ENCODE measurements at regions of chr20 and their contacts with region 1.

Region 1: DNA sequence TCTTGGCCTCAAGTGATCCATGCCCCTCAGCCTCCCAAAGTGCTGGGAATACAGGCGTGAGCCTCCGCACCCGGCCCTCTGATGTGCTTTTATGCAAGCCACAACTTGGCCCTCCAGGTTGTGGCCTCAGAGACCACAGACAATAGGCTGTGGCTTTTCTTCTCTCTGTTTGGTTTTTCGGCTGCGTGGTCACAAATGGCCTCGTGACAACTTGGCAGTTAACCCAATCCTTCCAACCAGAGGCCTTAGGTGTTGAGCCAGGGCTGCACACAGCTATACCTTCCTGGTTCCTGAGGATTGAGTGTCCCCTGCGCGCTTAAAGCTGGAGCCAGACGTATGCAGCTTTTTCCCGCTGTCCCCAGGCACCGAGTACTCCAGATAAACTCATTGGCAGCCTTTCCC is 6.3 kb upstream of the TGM3 start:
- DNase-seq: peak in 2 of 3 donors; percentile 35 to 37
- H3K4me3 ChIP-seq: peak overlapping the region in 1 of 3 experiments; percentile 1
- H3K4me3 Mint-ChIP-seq: peak overlapping the region; percentile 16 to 69
- H3K27ac ChIP-seq: peak overlapping the region; percentile 86 to 96
- H3K27ac Mint-ChIP-seq: peak overlapping the region; percentile 97 to 99 (median 99)
- H3K4me1 ChIP-seq: peaks cover 64 to 71% of the 10 kb centered on the region in 2 donors
- H3K4me1 Mint-ChIP-seq: peaks cover 60% of the 10 kb centered on the region
- H3K27me3 ChIP-seq: no peaks in the 10 kb centered on the region
- H3K27me3 Mint-ChIP-seq: peaks cover 0 to 2% (median 0%) of the 10 kb centered on the region in 3 donors
- CTCF ChIP-seq: no peak

Region 2: DNA sequence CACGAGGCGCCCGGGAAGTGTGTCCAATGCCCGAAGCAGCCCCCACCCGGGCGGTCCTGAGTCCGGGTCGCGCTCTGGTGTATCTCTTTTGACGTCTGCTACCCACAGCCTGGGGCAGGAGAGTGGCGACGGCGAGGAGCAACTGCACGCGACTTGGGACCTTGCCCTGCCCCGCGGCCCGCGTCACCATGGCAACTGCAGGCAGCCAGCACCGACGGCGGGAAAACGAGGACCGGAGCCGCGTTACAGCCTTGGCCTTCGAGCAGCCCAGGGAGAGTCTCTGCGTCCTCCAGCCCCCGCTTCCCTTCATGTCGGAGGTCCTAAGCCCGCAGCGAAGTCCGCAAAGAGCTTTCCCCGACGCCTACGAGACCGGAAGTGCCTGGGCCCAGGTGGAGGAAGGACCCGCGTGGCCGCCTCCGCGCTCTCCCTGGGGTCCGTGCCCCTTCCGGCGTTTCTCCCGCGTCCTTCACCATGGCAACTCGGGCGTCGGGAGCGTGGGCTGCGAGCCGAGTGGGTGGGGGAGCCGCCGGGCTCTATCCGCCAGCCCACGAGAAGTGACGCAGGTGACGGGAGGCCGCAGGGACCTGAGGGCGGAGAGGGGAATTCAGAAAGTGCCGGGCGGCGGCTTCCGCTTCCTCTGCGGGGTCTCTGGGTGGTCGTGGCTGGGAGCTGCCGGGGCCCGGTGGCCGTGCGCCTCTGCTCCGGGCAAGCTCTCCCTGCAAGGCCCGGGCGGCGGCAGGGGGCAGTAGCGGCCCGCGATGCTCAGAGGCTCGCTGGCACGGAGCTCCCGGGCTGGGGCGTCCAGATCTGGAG is 82.3 kb before region 1 on chr20:
- intact Hi-C with region 1: loop called in 1 of 2 experiments (anchors 1 kb)
- DNase-seq: peak; percentile 78 to 86 (median 78)
- H3K4me3 ChIP-seq: peak overlapping the region; percentile 7 to 72 (median 48)
- H3K4me3 Mint-ChIP-seq: peak overlapping the region; percentile 74 to 84
- H3K27ac ChIP-seq: peak overlapping the region in 1 of 2 donors; percentile 37
- H3K27ac Mint-ChIP-seq: peak overlapping the region in 5 of 7 donors; percentile 67 to 78 (median 73)
- H3K4me1 ChIP-seq: peaks cover 35% of the 10 kb centered on the region in 2 donors
- H3K4me1 Mint-ChIP-seq: peaks cover 43% of the 10 kb centered on the region
- H3K27me3 ChIP-seq: peaks cover 16 to 42% of the 10 kb centered on the region in 2 donors
- H3K27me3 Mint-ChIP-seq: peaks cover 41 to 51% (median 41%) of the 10 kb centered on the region in 3 donors
- CTCF ChIP-seq: peak; percentile 95

Region 3: GRCh38 chr20:2255926-2256531 is 33.4 kb before region 1 on chr20:
- intact Hi-C with region 1: loop called in 1 of 2 experiments (anchors 5 kb)
- DNase-seq: peak; percentile 33 to 78 (median 64)
- H3K4me3 ChIP-seq: peak overlapping the region in 1 of 3 experiments; percentile 55
- H3K4me3 Mint-ChIP-seq: peak overlapping the region in 1 of 2 donors; percentile 62
- H3K27ac ChIP-seq: peak overlapping the region; percentile 26 to 73
- H3K27ac Mint-ChIP-seq: peak overlapping the region; percentile 73 to 93 (median 85)
- H3K4me1 ChIP-seq: peaks cover 62 to 64% of the 10 kb centered on the region in 2 donors
- H3K4me1 Mint-ChIP-seq: peaks cover 58% of the 10 kb centered on the region
- H3K27me3 ChIP-seq: peaks cover 2 to 8% of the 10 kb centered on the region in 2 donors
- H3K27me3 Mint-ChIP-seq: peaks cover 8 to 14% (median 12%) of the 10 kb centered on the region in 3 donors
- CTCF ChIP-seq: no peak

Region 4: DNA sequence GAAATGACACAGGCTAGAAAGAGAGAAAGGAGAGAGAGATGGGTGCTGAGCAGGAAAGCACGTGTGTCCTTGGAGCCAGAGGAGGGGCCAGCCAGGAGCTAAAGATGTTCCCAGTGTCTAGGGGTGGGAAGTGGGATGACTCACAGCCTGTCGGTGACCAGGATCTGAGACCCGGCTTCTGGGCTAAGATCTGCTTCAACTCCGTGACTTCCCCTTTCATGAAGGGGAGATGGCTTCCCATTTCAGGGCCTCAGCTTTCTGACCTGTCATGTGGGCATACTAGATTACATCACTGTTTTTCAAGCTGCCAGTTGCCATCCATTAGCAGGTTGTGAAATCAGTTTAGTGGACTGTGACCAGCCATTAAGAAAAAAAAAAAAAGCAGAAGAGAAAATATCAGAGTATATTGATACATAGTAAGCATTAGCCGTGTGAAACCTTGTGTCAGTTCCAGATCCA is 11.7 kb after region 1 on chr20:
- intact Hi-C with region 1: loop called in 1 of 2 experiments (anchors 2 kb)
- DNase-seq: peak; percentile 98 to 100 (median 99)
- H3K4me3 ChIP-seq: peak overlapping the region in 1 of 3 experiments; percentile 16
- H3K4me3 Mint-ChIP-seq: peak overlapping the region in 1 of 2 donors; percentile 31
- H3K27ac ChIP-seq: peak overlapping the region; percentile 94 to 97
- H3K27ac Mint-ChIP-seq: peak overlapping the region; percentile 96 to 99 (median 98)
- H3K4me1 ChIP-seq: peaks cover 46 to 59% of the 10 kb centered on the region in 2 donors
- H3K4me1 Mint-ChIP-seq: peaks cover 58% of the 10 kb centered on the region
- H3K27me3 ChIP-seq: no peaks in the 10 kb centered on the region
- H3K27me3 Mint-ChIP-seq: peaks cover 0 to 5% (median 3%) of the 10 kb centered on the region in 3 donors
- CTCF ChIP-seq: no peak

Region 5: DNA sequence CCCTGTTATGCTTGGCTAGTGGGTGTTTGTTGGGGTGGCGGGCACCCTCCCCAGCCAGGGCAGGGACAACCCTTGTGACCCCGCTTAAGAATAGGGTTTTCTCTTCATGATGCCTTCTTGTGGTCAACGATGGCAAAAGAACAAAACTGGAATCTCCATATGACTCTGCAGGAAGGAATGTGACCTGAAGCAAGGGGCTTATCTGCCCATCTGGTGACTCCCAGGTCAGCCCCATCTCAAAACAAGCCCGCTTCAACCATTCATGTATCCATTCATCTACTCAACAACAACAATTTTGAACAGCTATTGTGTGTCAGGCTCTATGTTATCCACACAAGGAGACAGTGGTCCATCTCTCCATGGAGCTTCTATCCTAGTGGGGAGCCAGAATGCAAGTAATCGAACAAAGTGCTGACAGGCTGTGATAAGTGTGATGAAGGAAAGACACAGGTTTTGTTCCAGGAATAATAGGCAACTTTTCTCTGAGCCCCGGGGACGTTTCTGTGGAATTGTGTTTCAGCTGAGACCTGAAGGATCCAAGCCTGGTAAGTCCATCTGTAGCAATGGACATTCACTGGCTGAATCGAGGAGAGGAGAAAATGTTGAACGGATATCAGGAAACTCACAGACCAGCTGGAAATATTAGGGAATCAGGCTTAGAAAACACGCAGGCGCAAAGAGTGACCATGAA is 60.5 kb after region 1 on chr20:
- intact Hi-C with region 1: loop called in 1 of 2 experiments (anchors 10 kb)
- DNase-seq: no peak
- H3K4me3 ChIP-seq: no peak overlapping the region
- H3K4me3 Mint-ChIP-seq: no peak overlapping the region
- H3K27ac ChIP-seq: no peak overlapping the region
- H3K27ac Mint-ChIP-seq: peak overlapping the region in 1 of 7 donors; percentile 30
- H3K4me1 ChIP-seq: peaks cover 0 to 9% of the 10 kb centered on the region in 2 donors
- H3K4me1 Mint-ChIP-seq: peaks cover 15% of the 10 kb centered on the region
- H3K27me3 ChIP-seq: peaks cover 8 to 21% of the 10 kb centered on the region in 2 donors
- H3K27me3 Mint-ChIP-seq: peaks cover 28 to 45% (median 40%) of the 10 kb centered on the region in 3 donors
- CTCF ChIP-seq: no peak

Region 6: GRCh38 chr20:2544211-2544610 is 254.7 kb after region 1 on chr20:
- intact Hi-C with region 1: no loop called
- DNase-seq: no peak
- H3K4me3 ChIP-seq: no peak overlapping the region
- H3K4me3 Mint-ChIP-seq: peak overlapping the region in 1 of 2 donors; percentile 7
- H3K27ac ChIP-seq: no peak overlapping the region
- H3K27ac Mint-ChIP-seq: no peak overlapping the region
- H3K4me1 ChIP-seq: no peaks in the 10 kb centered on the region
- H3K4me1 Mint-ChIP-seq: peaks cover 4% of the 10 kb centered on the region
- H3K27me3 ChIP-seq: peaks cover 12 to 27% of the 10 kb centered on the region in 2 donors
- H3K27me3 Mint-ChIP-seq: peaks cover 19 to 34% (median 21%) of the 10 kb centered on the region in 3 donors
- CTCF ChIP-seq: no peak

Measured in CD14-positive monocyte (primary cell).